Activated CD4-positive, alpha-beta T cell treated with anti-CD3 and anti-CD28 coated beads for 36 hours (primary cell): ENCODE measurements at regions of chr5 and their contacts with region 1.

Region 1: DNA sequence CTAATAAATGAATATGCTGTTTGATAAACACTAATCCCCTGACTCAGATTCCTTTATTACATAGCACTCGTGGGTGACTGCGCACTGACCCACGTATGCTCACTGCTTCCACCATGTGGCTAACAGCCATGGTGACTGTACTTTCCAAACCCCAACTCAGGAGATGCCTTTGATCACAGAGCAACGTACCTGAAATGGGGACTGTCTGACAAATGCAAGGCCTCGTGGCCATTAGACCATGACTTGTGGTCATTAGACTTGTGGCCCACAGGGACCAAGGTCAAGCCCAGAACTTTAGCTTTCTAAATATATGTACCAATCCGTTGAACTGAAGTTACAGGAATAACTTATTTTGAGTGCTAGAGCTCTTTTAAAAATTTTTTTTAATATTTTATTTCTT is 46.6 kb downstream of the CYFIP2 start:
- DNase-seq: peak; percentile 76
- ATAC-seq: peak; percentile 95
- H3K4me3 Mint-ChIP-seq: no peak overlapping the region
- H3K27ac Mint-ChIP-seq: peak overlapping the region; percentile 83
- H3K4me1 Mint-ChIP-seq: peaks cover 36% of the 10 kb centered on the region
- H3K27me3 Mint-ChIP-seq: no peaks in the 10 kb centered on the region

Region 2: DNA sequence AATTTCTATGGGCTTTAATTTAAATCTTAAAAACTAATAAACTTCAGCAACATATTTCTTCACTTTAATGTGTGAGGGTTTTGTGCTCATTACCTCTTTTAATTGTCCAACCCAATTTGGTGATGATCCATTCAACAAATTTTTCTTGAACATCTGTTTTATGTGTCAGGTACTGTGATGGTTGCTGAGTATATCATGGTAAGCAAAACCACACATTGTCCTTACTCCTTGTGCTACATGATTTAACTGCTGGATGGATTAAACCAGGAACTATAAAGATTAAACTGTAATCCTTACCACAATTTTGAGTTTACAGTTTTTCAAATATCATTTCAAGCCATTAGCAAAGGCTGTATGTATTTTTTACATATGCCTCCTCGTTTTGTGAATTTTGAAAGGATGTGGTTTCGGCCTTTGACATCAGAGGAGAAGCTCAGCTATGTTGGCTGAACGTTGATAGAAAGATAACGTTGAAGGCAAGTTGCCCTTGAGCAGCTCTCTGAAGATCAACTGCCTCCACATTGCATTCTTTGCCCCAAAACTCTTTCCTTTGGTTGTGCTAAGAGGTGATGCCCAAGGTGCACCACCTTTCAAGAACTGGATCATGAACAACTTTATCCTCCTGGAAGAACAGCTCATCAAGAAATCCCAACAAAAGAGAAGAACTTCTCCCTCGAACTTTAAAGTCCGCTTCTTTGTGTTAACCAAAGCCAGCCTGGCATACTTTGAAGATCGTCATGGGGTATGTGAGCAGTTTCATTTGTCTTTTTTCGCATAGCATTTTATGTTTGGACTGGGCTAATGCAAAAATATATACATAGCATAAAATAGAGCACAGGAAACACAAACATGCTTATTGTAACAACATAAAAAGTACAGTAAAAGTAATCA is 131.9 kb before region 1 on chr5 and contains the start of gene ITK:
- CTCF ChIA-PET with region 1: no interaction called
- POLR2A ChIA-PET with region 1: no interaction called
- intact Hi-C with region 1: no loop called
- DNase-seq: peak; percentile 52
- ATAC-seq: peak; percentile 45
- H3K4me3 Mint-ChIP-seq: peak within 1 kb of the TSS; percentile 93
- H3K27ac Mint-ChIP-seq: peak within 1 kb of the TSS; percentile 100
- H3K4me1 Mint-ChIP-seq: peaks cover 43% of the 10 kb centered on the region
- H3K27me3 Mint-ChIP-seq: no peaks in the 10 kb centered on the region
- total RNA-seq, gene ITK: 208 to 249 TPM

Region 3: GRCh38 chr5:157265714-157266285 is 46.7 kb before region 1 on chr5 and contains the start of gene CYFIP2:
- CTCF ChIA-PET with region 1: interaction called, 5 read pairs
- POLR2A ChIA-PET with region 1: no interaction called
- intact Hi-C with region 1: loop called (anchors 5 kb)
- DNase-seq: peak; percentile 91
- ATAC-seq: peak; percentile 78
- H3K4me3 Mint-ChIP-seq: peak within 1 kb of the TSS; percentile 96
- H3K27ac Mint-ChIP-seq: peak within 1 kb of the TSS; percentile 98
- H3K4me1 Mint-ChIP-seq: peaks cover 68% of the 10 kb centered on the region
- H3K27me3 Mint-ChIP-seq: no peaks in the 10 kb centered on the region
- total RNA-seq, gene CYFIP2: 277 to 526 TPM

Region 4: DNA sequence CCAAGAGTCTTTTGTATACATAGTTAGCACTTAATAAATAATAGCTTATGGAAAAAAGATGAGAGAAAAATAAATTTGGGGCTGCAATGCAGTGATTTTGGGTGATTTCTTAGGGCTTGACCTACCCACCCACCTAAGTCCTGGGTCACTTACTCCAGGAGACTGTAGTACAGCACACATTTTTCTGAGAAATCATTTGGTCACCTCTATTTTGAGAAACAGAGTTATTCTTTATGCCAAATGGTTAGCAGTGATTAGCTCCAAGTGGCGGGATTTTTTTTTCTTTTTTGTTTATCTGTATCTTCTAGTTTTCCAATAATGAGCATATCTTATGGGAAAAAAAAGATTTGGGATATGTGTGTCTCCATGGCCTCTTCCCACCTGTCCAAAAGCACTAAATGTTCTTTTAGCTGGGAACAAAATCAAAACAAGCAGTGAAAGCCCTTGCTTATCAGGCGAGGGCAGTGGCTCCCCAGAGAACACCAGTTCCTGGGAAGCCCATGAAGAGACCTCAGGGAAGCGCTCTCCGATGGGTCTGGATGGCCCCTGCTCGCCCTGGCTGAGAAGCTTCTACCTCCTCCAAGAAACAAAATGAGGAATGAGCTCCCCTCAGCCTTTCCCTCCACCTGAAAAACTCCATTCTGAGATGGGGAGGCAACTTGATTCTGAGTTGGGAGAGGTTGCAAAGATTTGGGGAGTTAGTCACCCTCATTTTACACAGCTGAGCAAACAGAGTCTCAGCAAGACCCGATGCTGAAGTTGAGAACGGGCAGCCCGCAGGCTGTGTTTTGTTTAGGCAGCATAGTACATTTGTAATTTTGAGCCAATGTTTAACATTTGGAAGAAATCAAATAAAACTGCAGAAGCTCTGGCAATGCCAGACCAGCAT is 23.3 kb after region 1 on chr5:
- CTCF ChIA-PET with region 1: no interaction called
- POLR2A ChIA-PET with region 1: no interaction called
- intact Hi-C with region 1: loop called in 1 of 2 experiments (anchors 1 kb)
- DNase-seq: no peak
- ATAC-seq: no peak
- H3K4me3 Mint-ChIP-seq: no peak overlapping the region
- H3K27ac Mint-ChIP-seq: no peak overlapping the region
- H3K4me1 Mint-ChIP-seq: peaks cover 13% of the 10 kb centered on the region
- H3K27me3 Mint-ChIP-seq: no peaks in the 10 kb centered on the region

Region 5: GRCh38 chr5:157665467-157666100 is 353.1 kb after region 1 on chr5:
- CTCF ChIA-PET with region 1: no interaction called
- POLR2A ChIA-PET with region 1: no interaction called
- intact Hi-C with region 1: no loop called
- DNase-seq: no peak
- ATAC-seq: no peak
- H3K4me3 Mint-ChIP-seq: no peak overlapping the region
- H3K27ac Mint-ChIP-seq: no peak overlapping the region
- H3K4me1 Mint-ChIP-seq: peaks cover 10% of the 10 kb centered on the region
- H3K27me3 Mint-ChIP-seq: peaks cover 4% of the 10 kb centered on the region